Naive thymus-derived CD8-positive, alpha-beta T cell (primary cell): ENCODE measurements at regions of chr7 and their contacts with region 1.

Region 1: DNA sequence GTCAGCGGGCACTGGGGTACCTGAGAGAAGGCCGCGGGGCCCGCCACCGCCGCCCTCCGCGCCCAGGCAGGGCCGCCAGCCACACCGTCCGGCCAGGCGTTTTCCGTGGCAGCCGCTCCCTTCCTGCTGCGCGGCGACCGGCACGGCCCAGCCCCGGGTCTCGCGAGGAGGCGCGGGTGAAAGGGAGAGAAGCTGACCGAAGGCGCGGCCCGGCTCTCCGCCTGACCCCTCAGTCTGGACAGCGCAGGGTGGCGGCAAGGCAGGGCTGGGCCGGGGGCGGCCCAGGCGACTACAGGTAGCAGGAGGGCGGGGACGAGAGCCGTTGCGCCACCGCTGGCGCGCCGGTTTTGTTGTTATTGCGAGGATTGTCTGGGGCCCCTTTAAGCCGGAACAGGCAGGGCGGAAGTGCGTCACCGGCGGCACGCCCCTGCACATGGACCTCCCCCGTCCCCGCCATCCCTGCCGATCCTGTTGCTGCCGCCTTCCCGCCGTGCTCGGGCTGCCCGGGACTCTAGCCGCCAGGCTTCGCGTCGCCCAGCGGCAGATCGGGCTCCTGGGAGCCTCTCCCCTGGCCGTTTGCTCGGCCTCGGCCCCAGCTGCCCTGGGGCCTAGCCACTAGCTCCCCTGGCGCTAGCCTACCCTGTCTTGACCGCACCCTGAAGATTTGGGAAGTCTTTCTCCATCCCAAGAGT is at the start of gene HERPUD2:
- DNase-seq: peak; percentile 86 to 95 (median 92)
- ATAC-seq: peak; percentile 85 to 86
- H3K4me3 Mint-ChIP-seq: peak within 1 kb of the TSS; percentile 90 to 99 (median 95)
- H3K27ac Mint-ChIP-seq: peak within 1 kb of the TSS; percentile 95 to 100 (median 99)
- H3K4me1 Mint-ChIP-seq: peaks cover 23 to 69% (median 55%) of the 10 kb centered on the region in 4 donors
- H3K27me3 Mint-ChIP-seq: no peaks in the 10 kb centered on the region
- polyA plus RNA-seq, gene HERPUD2: 58.7 to 78.2 (median 75.9) TPM

Region 2: GRCh38 chr7:35605760-35606159 is 89.2 kb before region 1 on chr7:
- POLR2A ChIA-PET with region 1: no interaction called
- DNase-seq: no peak
- ATAC-seq: no peak
- H3K4me3 Mint-ChIP-seq: no peak overlapping the region
- H3K27ac Mint-ChIP-seq: peak overlapping the region in 1 of 10 donors; percentile 74
- H3K4me1 Mint-ChIP-seq: peaks cover 0 to 2% (median 0%) of the 10 kb centered on the region in 4 donors
- H3K27me3 Mint-ChIP-seq: no peaks in the 10 kb centered on the region

Region 3: DNA sequence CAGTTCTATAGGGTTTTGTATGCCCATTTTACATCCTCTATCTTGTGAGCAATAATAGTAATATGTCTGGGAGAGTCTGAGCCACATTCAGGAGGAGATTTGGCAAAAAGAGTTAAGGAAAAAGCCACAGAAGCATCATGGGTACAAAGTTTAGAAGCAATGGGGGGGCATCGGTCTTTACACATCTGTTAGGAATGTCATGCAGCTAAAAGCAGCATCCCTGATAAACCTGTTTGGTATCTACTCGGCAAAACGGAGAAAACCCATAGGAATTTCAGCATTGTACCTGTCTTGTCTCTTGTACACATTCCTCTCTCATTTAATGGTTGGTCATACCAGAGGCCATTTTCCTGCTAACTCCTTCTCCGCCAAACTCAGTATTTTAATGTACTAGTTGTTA is 12.5 kb after region 1 on chr7:
- POLR2A ChIA-PET with region 1: interaction called, 20 read pairs
- DNase-seq: no peak
- ATAC-seq: no peak
- H3K4me3 Mint-ChIP-seq: no peak overlapping the region
- H3K27ac Mint-ChIP-seq: peak overlapping the region in 2 of 10 donors; percentile 58 to 83
- H3K4me1 Mint-ChIP-seq: peaks cover 10 to 29% (median 24%) of the 10 kb centered on the region in 4 donors
- H3K27me3 Mint-ChIP-seq: no peaks in the 10 kb centered on the region

Region 4: DNA sequence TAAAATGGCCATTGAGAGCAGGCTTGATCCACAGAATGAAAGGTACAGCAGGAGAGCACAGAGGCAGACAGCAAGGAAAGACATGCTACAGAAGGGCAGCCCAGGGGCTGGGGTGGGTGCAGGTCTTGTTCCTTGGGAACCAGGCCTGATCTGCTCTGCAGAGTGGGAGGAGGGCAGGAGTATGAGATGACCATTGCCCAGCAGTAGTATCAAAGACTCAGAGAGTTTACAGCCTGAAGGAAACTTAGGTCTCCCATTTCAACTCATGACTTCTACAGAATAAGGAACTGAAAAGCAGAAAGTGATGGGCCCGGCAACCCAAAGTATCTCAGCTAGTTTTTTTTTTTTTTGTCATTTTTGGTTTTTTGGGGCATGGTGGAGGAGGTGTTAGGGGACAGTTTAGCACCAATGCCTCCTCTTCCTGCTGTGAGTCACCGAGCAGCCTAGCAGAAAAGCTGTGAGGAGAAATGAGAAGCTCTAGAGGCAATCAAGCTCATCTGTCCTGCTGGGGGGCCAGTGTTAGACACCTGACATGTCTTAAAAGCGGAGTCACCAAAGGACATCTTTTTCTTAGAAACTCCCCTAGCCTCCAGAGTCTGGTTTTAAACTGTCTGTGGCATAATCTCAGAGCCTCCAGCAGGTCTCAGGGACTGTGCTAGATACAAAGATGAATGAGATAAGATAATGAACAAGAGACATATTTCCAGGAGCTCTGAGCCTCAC is 34.3 kb after region 1 on chr7:
- POLR2A ChIA-PET with region 1: interaction called, 12 read pairs
- DNase-seq: peak in 2 of 10 donors; percentile 51 to 53
- ATAC-seq: peak in 1 of 2 donors; percentile 43
- H3K4me3 Mint-ChIP-seq: peak overlapping the region in 5 of 10 donors; percentile 9 to 62 (median 14)
- H3K27ac Mint-ChIP-seq: peak overlapping the region in 8 of 10 donors; percentile 47 to 94 (median 76)
- H3K4me1 Mint-ChIP-seq: peaks cover 26 to 68% (median 60%) of the 10 kb centered on the region in 4 donors
- H3K27me3 Mint-ChIP-seq: no peaks in the 10 kb centered on the region

Region 5: DNA sequence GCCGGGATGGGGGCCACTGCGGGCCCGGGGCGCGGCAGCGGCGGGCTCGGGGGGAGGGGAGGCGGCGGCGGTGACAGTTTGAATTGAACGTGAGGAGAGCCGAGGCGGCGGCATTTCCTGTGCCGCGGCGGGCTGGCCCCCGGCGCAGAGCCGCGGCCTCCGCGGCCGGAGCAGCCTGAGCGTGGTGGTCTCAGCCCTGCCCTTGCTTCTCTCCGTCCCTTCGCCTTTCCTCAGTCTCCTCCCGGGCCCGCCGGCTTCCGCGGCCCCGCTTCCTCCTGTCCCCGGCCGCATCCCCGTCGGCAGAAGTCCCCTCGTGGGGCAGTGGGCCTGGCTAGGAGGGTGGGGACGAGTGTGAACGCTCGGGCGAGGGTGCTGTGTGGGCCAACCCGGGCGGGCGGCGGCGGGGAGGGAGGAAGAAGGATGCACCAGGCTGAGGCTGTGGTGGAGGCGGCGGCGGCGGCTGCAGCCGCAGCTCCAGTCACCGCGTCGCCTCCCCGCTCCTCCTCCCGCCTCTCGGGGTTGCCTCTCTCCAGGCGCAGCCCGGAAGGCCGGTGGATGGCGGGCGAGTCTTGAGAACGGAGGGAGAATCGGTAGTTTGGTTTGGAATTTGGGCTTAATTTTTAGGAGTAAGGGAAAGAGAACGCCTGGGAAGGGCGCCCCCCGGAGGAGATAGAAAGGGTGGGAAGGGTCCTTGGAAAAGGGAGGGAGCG is 106.6 kb after region 1 on chr7:
- POLR2A ChIA-PET with region 1: interaction called, 76 read pairs
- DNase-seq: peak; percentile 65 to 87 (median 76)
- ATAC-seq: peak; percentile 45 to 52
- H3K4me3 Mint-ChIP-seq: peak overlapping the region; percentile 91 to 97 (median 94)
- H3K27ac Mint-ChIP-seq: peak overlapping the region; percentile 94 to 100 (median 99)
- H3K4me1 Mint-ChIP-seq: peaks cover 35 to 57% (median 54%) of the 10 kb centered on the region in 4 donors
- H3K27me3 Mint-ChIP-seq: no peaks in the 10 kb centered on the region

Region 6: DNA sequence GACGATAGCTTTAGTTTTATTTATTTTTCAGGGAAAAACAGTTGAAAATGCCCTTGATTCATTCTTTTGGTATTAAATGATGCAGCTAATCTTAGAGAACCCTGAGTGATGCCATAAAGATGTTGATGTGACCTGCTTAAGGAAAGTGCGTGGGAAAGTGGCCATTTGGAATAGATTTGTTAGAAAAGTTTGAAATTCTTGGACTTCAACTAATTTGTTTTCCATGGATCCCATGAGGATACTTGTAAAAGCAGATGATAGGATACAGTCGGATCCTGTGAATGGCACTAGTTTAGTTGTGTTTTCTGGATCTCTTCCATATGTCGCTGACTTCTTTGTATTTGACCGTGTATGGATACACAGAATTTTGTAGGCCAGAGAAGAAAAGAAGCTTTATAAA is 174.9 kb after region 1 on chr7:
- POLR2A ChIA-PET with region 1: no interaction called
- DNase-seq: no peak
- ATAC-seq: no peak
- H3K4me3 Mint-ChIP-seq: no peak overlapping the region
- H3K27ac Mint-ChIP-seq: peak overlapping the region in 3 of 10 donors; percentile 9 to 13 (median 10)
- H3K4me1 Mint-ChIP-seq: peaks cover 16 to 39% (median 30%) of the 10 kb centered on the region in 4 donors
- H3K27me3 Mint-ChIP-seq: no peaks in the 10 kb centered on the region